H1 (cell line): ENCODE measurements at regions of chr1 and their contacts with region 1.

Region 1: GRCh38 chr1:63691701-63692425 is 82.0 kb upstream of the ROR1 start:
- DNase-seq: no peak
- H3K4me3 ChIP-seq: no peak overlapping the region
- H3K27ac ChIP-seq: no peak overlapping the region
- H3K4me1 ChIP-seq: no peaks in the 10 kb centered on the region
- H3K27me3 ChIP-seq: no peaks in the 10 kb centered on the region
- CTCF ChIP-seq: peak in 2 of 3 experiments; percentile 71 to 92; a peak in 3 of 4 replicates
- EP300 ChIP-seq: no peak
- POLR2A ChIP-seq: no peak
- RAD21 ChIP-seq: peak; percentile 90 to 92

Region 2: GRCh38 chr1:63305043-63305442 is 386.8 kb before region 1 on chr1:
- CTCF ChIA-PET with region 1: no interaction called
- POLR2A ChIA-PET with region 1: no interaction called
- DNase-seq: no peak
- H3K4me3 ChIP-seq: peak overlapping the region in 1 of 4 experiments; percentile 34; a peak in 1 of 8 replicates
- H3K27ac ChIP-seq: no peak overlapping the region
- H3K4me1 ChIP-seq: peaks cover 0 to 12% (median 3%) of the 10 kb centered on the region in 4 experiments; a peak in 5 of 7 replicates
- H3K27me3 ChIP-seq: no peaks in the 10 kb centered on the region; a peak in 1 of 7 replicates
- CTCF ChIP-seq: no peak
- EP300 ChIP-seq: no peak
- POLR2A ChIP-seq: no peak
- RAD21 ChIP-seq: no peak

Region 3: DNA sequence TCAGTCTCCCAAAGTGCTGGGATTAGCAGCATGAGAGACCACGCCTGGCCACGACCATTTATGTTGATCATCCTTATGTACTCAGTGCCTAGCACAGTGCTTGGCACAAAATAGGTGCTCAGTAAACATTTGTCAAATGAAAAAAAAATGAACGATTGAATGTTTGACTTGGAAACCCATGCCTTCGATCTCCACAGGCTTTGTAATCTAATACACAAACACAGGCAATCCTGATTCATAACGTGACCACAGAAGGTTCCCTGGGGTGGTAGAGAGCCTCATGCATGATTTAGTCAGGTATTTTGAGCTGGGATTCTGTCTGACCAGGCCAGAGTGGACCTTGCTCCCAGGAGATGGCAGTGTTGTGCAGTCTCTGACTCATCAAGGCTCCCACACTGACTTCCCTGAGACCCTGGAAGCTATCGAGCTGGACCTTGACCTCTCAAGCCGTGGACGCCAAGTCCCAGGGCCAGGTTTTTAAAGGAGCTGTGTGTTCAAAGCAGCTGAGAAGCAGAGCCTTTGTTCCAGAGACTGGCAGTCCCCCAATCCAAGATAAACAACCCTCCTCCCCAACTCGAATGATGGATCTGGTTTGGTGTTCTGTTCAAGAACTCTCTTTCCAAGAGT is 17.5 kb before region 1 on chr1:
- CTCF ChIA-PET with region 1: interaction called, 51 read pairs
- POLR2A ChIA-PET with region 1: interaction called, 4 read pairs
- DNase-seq: peak; percentile 54 to 79
- H3K4me3 ChIP-seq: no peak overlapping the region
- H3K27ac ChIP-seq: no peak overlapping the region
- H3K4me1 ChIP-seq: peaks cover 0 to 3% (median 0%) of the 10 kb centered on the region in 4 experiments; a peak in 2 of 7 replicates
- H3K27me3 ChIP-seq: 0 out of 7 replicates have a peak, but pooled peaks cover 0 to 2% (median 0%) of the 10 kb centered on the region in 4 experiments
- CTCF ChIP-seq: peak; percentile 83 to 96 (median 88)
- EP300 ChIP-seq: no peak
- POLR2A ChIP-seq: no peak
- RAD21 ChIP-seq: peak; percentile 97 to 98

Region 4: DNA sequence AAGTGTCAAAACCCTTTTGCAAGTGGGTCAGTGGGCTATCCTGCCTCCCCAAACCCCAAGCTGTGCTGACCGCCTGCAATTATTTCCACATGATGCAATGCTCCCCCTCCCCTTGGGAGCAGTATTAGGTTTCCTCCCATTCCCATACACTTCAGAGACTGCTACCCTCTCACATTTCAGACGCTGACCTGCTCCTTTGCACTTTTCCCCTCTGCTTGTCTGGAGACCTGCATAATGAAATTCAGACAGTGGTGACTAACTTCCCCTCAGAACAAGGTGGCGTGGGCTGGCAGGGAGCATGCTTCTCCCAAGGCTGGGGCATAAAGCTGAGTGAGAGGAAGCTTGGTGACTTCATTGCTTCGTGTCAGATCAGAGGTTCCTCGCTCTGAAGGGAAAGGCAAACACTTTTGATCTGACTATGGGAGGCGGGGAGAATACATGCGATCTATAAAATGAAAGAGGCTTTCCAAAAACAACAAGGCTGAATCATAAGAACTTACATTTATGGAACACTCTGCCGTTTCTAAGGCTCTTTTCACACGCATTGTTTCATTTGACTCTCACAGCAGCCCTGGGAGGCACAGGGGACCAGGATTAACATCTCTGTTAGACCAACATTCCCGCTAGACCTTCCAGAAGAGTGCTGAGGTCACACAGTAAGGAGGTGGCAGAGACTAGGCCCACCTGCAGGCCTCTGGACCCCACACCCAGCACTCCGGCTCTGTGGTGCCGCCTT is 54.4 kb after region 1 on chr1:
- CTCF ChIA-PET with region 1: interaction called, 22 read pairs
- POLR2A ChIA-PET with region 1: no interaction called
- DNase-seq: peak in 1 of 2 experiments; percentile 54
- H3K4me3 ChIP-seq: 0 out of 8 replicates have a peak overlapping the region, but pooled peaks of 1 of the 4 experiments have one; percentile 2
- H3K27ac ChIP-seq: no peak overlapping the region
- H3K4me1 ChIP-seq: peaks cover 0 to 9% (median 5%) of the 10 kb centered on the region in 4 experiments; a peak in 6 of 7 replicates
- H3K27me3 ChIP-seq: 0 out of 7 replicates have a peak, but pooled peaks cover 0 to 1% (median 0%) of the 10 kb centered on the region in 4 experiments
- CTCF ChIP-seq: no peak
- EP300 ChIP-seq: no peak
- POLR2A ChIP-seq: no peak
- RAD21 ChIP-seq: no peak

Region 5: GRCh38 chr1:63794939-63795378 is 103.1 kb after region 1 on chr1:
- CTCF ChIA-PET with region 1: interaction called, 12 read pairs
- POLR2A ChIA-PET with region 1: no interaction called
- DNase-seq: peak; percentile 60 to 62
- H3K4me3 ChIP-seq: no peak overlapping the region; a peak in 2 of 8 replicates
- H3K27ac ChIP-seq: no peak overlapping the region
- H3K4me1 ChIP-seq: peaks cover 40 to 66% (median 59%) of the 10 kb centered on the region in 4 experiments
- H3K27me3 ChIP-seq: no peaks in the 10 kb centered on the region
- CTCF ChIP-seq: no peak
- EP300 ChIP-seq: no peak
- POLR2A ChIP-seq: no peak
- RAD21 ChIP-seq: no peak

Region 6: GRCh38 chr1:63902844-63903589 is 211.2 kb after region 1 on chr1:
- CTCF ChIA-PET with region 1: interaction called, 11 read pairs
- POLR2A ChIA-PET with region 1: no interaction called
- DNase-seq: no peak
- H3K4me3 ChIP-seq: no peak overlapping the region
- H3K27ac ChIP-seq: no peak overlapping the region
- H3K4me1 ChIP-seq: peaks cover 1 to 23% (median 18%) of the 10 kb centered on the region in 4 experiments; a peak in 5 of 7 replicates
- H3K27me3 ChIP-seq: no peaks in the 10 kb centered on the region
- CTCF ChIP-seq: no peak
- EP300 ChIP-seq: no peak
- POLR2A ChIP-seq: no peak
- RAD21 ChIP-seq: no peak

Region 7: DNA sequence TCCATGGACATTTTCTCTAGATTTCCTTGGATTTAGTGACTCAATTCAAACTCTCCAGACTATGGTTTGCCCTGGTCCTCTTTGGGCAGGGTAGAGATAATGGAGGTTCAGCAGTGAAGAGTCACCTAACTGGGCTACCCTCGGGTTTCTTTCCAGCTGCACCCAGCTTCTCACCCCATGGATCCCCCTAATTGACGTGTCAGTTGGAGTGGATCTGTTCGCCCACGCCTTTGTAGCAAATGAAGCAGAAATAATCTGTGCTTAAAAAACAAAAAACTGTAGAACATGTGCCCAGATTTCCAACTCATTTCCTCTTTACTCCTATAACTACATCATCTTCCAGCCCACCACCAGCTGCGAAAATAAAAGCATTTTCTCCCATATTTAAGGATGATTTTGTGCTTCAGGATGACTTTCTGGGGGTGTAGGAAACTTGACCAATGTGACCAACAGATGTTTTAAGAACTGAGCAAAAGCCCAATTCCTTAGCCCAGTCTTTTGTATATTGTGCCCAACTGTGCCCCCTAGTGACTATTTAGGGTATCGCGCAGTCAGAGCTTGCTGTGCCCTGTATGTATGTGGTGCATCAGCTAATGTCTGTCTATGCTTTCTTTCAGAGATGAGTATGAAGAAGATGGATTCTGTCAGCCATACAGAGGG is 445.0 kb after region 1 on chr1:
- CTCF ChIA-PET with region 1: interaction called, 28 read pairs
- POLR2A ChIA-PET with region 1: no interaction called
- DNase-seq: peak; percentile 49 to 93
- H3K4me3 ChIP-seq: no peak overlapping the region
- H3K27ac ChIP-seq: no peak overlapping the region
- H3K4me1 ChIP-seq: no peaks in the 10 kb centered on the region
- H3K27me3 ChIP-seq: no peaks in the 10 kb centered on the region
- CTCF ChIP-seq: peak; percentile 57 to 92 (median 72)
- EP300 ChIP-seq: no peak
- POLR2A ChIP-seq: no peak
- RAD21 ChIP-seq: peak; percentile 87 to 90

Region 8: DNA sequence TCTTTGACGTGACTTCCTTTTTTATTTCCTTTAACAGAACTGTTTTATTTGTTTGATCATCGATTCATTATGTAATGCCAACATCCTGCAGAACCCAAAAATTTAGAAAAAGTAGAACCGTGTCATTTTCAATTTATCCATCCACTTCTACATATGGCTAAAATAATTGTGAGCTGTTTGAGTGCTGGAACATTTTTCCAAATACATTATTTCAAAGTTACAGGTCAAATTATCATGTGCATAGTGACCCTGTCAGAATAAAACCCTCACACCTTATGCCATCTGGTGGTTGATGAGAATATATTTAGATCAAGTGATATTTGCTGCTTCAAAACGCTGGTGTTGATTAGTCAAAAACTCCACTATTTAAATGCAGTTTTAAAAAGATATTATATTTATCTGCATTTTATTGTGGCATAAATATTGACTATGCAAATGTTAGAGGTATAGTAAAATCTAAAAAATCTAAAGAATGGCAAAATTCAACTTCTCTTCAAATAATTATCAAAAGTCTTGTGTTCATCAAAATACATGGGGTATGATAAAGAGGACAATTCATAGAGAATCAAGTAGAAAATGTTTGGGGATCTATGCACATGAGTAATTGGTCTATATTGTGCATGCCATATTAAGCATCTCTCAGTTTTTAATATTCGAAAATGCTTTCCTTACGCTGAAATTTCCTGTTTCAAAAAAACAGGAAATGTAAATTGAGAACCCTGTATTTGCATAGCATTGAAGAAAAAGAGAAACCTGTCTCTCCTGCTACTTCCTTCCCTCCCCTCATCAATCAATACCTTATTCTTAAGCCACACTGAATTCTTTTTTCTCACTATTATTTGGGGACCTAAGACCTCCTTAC is 551.3 kb after region 1 on chr1:
- CTCF ChIA-PET with region 1: interaction called, 18 read pairs
- POLR2A ChIA-PET with region 1: no interaction called
- DNase-seq: no peak
- H3K4me3 ChIP-seq: peak overlapping the region in 1 of 4 experiments; percentile 10; a peak in 1 of 8 replicates
- H3K27ac ChIP-seq: no peak overlapping the region
- H3K4me1 ChIP-seq: peaks cover 6 to 15% (median 11%) of the 10 kb centered on the region in 4 experiments; a peak in 5 of 7 replicates
- H3K27me3 ChIP-seq: no peaks in the 10 kb centered on the region
- CTCF ChIP-seq: peak in 2 of 3 experiments; percentile 33 to 39; a peak in 2 of 4 replicates
- EP300 ChIP-seq: no peak
- POLR2A ChIP-seq: no peak
- RAD21 ChIP-seq: peak; percentile 70 to 74